ENCODE measurements at regions of chr7 and their contacts with region 1.

Region 1: GRCh38 chr7:14021069-14021468 is 31.6 kb upstream of the ETV1 start:
- DNase-seq: no peak
- H3K4me3 ChIP-seq: no peak overlapping the region
- H3K27ac ChIP-seq: no peak overlapping the region
- H3K4me1 ChIP-seq: no peaks in the 10 kb centered on the region
- H3K27me3 ChIP-seq: no peaks in the 10 kb centered on the region
- CTCF ChIP-seq: no peak
- POLR2A ChIP-seq: no peak

Region 2: GRCh38 chr7:14070746-14071444 is 49.8 kb after region 1 on chr7:
- intact Hi-C with region 1: loop called (anchors 10 kb)
- DNase-seq: no peak
- H3K4me3 ChIP-seq: no peak overlapping the region
- H3K27ac ChIP-seq: no peak overlapping the region
- H3K4me1 ChIP-seq: no peaks in the 10 kb centered on the region
- H3K27me3 ChIP-seq: no peaks in the 10 kb centered on the region
- CTCF ChIP-seq: no peak
- POLR2A ChIP-seq: no peak